Endothelial cell of umbilical vein (primary cell): ENCODE measurements at regions of chr16 and their contacts with region 1.

Region 1: GRCh38 chr16:56477096-56477878 is 25.9 kb downstream of the OGFOD1 start:
- DNase-seq: peak; percentile 75
- H3K4me3 ChIP-seq: no peak overlapping the region
- H3K27ac ChIP-seq: peak overlapping the region; percentile 8
- H3K4me1 ChIP-seq: peaks cover 6% of the 10 kb centered on the region
- H3K27me3 ChIP-seq: no peaks in the 10 kb centered on the region
- CTCF ChIP-seq: no peak
- POLR2A ChIP-seq: no peak

Region 2: DNA sequence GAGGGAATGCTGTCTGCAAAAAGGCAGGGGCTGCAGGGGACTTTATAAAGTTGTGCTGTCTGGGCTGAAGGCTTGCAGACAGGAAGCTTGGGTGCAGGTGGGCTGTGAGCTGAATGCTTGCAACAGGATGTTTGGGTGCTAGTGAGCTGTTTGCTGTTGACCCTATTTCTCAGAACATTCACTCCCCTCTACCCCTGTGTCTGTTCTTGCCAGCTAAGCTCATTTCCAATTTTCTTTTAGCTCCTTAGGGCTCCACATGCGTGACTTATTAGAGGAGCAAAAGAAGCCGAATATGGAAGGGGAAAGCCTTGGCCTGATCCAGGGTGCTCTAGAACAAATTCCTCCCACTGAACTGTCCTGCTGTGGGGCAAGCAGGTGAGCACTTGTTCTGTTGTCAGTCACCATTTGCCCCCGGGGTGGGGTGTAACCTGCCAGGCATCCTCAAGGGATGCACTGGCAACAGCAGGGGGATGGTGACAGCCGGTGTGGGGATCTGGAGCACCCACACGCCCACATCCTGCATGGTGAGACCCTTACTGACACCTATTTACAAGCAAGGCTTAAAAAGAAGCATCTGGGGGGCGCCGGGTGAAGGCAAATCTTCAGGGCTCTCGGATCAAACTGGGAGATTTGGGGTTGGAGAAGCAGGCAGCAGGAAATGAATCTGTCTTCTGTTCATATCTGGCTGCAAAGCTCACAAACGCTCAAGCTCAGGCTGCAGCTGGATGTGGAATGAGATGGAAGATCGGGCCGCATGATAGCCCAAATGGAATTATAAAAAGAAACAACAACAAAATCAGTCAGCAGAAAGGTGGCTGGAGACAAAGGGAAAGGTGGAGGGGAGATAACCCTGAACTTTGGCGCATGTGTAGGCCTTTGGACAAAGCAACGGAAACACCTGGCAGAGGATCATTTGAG is 231.5 kb after region 1 on chr16:
- CTCF ChIA-PET with region 1: no interaction called
- POLR2A ChIA-PET with region 1: no interaction called
- dilution Hi-C with region 1: no loop called
- intact Hi-C with region 1: loop called (anchors 10 kb)
- DNase-seq: no peak
- H3K4me3 ChIP-seq: no peak overlapping the region
- H3K27ac ChIP-seq: no peak overlapping the region
- H3K4me1 ChIP-seq: no peaks in the 10 kb centered on the region
- H3K27me3 ChIP-seq: no peaks in the 10 kb centered on the region
- CTCF ChIP-seq: no peak
- POLR2A ChIP-seq: no peak